T-cell (primary cell): ENCODE measurements at regions of chr9 and their contacts with region 1.

Region 1: GRCh38 chr9:104765138-104765537 is 1.2 kb downstream of the NIPSNAP3B start:
- DNase-seq: no peak
- ATAC-seq: no peak
- H3K4me3 ChIP-seq: no peak overlapping the region
- H3K4me3 Mint-ChIP-seq: peak overlapping the region; percentile 86 to 92 (median 91)
- H3K27ac ChIP-seq: no peak overlapping the region
- H3K27ac Mint-ChIP-seq: no peak overlapping the region
- H3K4me1 ChIP-seq: peaks cover 2 to 13% of the 10 kb centered on the region in 2 experiments
- H3K4me1 Mint-ChIP-seq: peaks cover 0 to 10% (median 6%) of the 10 kb centered on the region in 3 donors
- H3K27me3 ChIP-seq: peaks cover 0 to 8% of the 10 kb centered on the region in 2 experiments
- H3K27me3 Mint-ChIP-seq: no peaks in the 10 kb centered on the region

Region 2: GRCh38 chr9:104633976-104634520 is 131.1 kb before region 1 on chr9:
- CTCF ChIA-PET with region 1: no interaction called
- POLR2A ChIA-PET with region 1: no interaction called
- DNase-seq: no peak
- ATAC-seq: no peak
- H3K4me3 ChIP-seq: no peak overlapping the region
- H3K4me3 Mint-ChIP-seq: no peak overlapping the region
- H3K27ac ChIP-seq: no peak overlapping the region
- H3K27ac Mint-ChIP-seq: no peak overlapping the region
- H3K4me1 ChIP-seq: no peaks in the 10 kb centered on the region
- H3K4me1 Mint-ChIP-seq: no peaks in the 10 kb centered on the region
- H3K27me3 ChIP-seq: peaks cover 0 to 10% of the 10 kb centered on the region in 2 experiments
- H3K27me3 Mint-ChIP-seq: peaks cover 0 to 5% of the 10 kb centered on the region in 2 donors

Region 3: DNA sequence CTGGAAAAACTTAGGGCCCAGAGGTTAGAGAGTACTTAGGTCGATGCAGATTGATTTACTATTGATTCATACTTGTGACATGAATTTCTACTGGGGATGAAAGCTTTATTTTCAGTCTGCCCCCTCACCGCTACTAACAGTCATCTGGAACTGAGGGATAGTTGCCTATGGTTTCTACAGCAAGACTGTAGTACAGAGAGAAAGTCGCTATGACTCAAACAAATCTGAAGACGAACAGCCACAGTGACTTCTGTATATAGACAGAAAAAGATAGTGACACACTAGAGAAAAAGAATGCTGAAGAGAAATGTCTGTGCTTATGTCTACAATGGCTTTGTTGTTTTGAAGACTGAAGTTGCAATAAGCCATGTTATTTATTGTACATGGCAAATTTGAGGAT is 53.5 kb before region 1 on chr9:
- CTCF ChIA-PET with region 1: no interaction called
- POLR2A ChIA-PET with region 1: no interaction called
- DNase-seq: no peak
- ATAC-seq: no peak
- H3K4me3 ChIP-seq: no peak overlapping the region
- H3K4me3 Mint-ChIP-seq: no peak overlapping the region
- H3K27ac ChIP-seq: no peak overlapping the region
- H3K27ac Mint-ChIP-seq: no peak overlapping the region
- H3K4me1 ChIP-seq: no peaks in the 10 kb centered on the region
- H3K4me1 Mint-ChIP-seq: peaks cover 0 to under 1% (median 0%) of the 10 kb centered on the region in 3 donors
- H3K27me3 ChIP-seq: no peaks in the 10 kb centered on the region
- H3K27me3 Mint-ChIP-seq: peaks cover 0 to 3% of the 10 kb centered on the region in 2 donors

Region 4: GRCh38 chr9:104725014-104725413 is 40.1 kb before region 1 on chr9:
- CTCF ChIA-PET with region 1: no interaction called
- POLR2A ChIA-PET with region 1: interaction called in 1 of 2 experiments, 20 read pairs
- DNase-seq: no peak
- ATAC-seq: no peak
- H3K4me3 ChIP-seq: no peak overlapping the region
- H3K4me3 Mint-ChIP-seq: no peak overlapping the region
- H3K27ac ChIP-seq: no peak overlapping the region
- H3K27ac Mint-ChIP-seq: no peak overlapping the region
- H3K4me1 ChIP-seq: no peaks in the 10 kb centered on the region
- H3K4me1 Mint-ChIP-seq: peaks cover 0 to 6% (median 0%) of the 10 kb centered on the region in 3 donors
- H3K27me3 ChIP-seq: peaks cover 0 to 6% of the 10 kb centered on the region in 2 experiments
- H3K27me3 Mint-ChIP-seq: peaks cover 0 to 4% of the 10 kb centered on the region in 2 donors

Region 5: GRCh38 chr9:104747558-104748358 is 17.4 kb before region 1 on chr9 and contains the start of gene NIPSNAP3A:
- CTCF ChIA-PET with region 1: interaction called, 3 to 4 read pairs
- POLR2A ChIA-PET with region 1: interaction called in 1 of 2 experiments, 14 read pairs
- DNase-seq: peak; percentile 72 to 93 (median 82)
- ATAC-seq: peak; percentile 89 to 92 (median 92)
- H3K4me3 ChIP-seq: peak within 1 kb of the TSS; percentile 74 to 94
- H3K4me3 Mint-ChIP-seq: peak within 1 kb of the TSS; percentile 81 to 93 (median 90)
- H3K27ac ChIP-seq: peak within 1 kb of the TSS; percentile 90
- H3K27ac Mint-ChIP-seq: peak within 1 kb of the TSS; percentile 96
- H3K4me1 ChIP-seq: peaks cover 6 to 13% of the 10 kb centered on the region in 2 experiments
- H3K4me1 Mint-ChIP-seq: peaks cover 18 to 27% (median 21%) of the 10 kb centered on the region in 3 donors
- H3K27me3 ChIP-seq: no peaks in the 10 kb centered on the region
- H3K27me3 Mint-ChIP-seq: no peaks in the 10 kb centered on the region
- total RNA-seq, gene NIPSNAP3A: 6.8 to 10.5 (median 9.8) TPM